ENCODE measurements at regions of chr5 and their contacts with region 1.

Region 1: GRCh38 chr5:171330021-171330420 is 21.0 kb downstream of the TLX3 start:
- DNase-seq: no peak
- ATAC-seq: no peak
- H3K4me3 ChIP-seq: no peak overlapping the region
- H3K27ac ChIP-seq: no peak overlapping the region
- H3K4me1 ChIP-seq: no peaks in the 10 kb centered on the region
- H3K27me3 ChIP-seq: peaks cover 36% of the 10 kb centered on the region
- CTCF ChIP-seq: no peak
- POLR2A ChIP-seq: no peak
- RAD21 ChIP-seq: no peak

Region 2: DNA sequence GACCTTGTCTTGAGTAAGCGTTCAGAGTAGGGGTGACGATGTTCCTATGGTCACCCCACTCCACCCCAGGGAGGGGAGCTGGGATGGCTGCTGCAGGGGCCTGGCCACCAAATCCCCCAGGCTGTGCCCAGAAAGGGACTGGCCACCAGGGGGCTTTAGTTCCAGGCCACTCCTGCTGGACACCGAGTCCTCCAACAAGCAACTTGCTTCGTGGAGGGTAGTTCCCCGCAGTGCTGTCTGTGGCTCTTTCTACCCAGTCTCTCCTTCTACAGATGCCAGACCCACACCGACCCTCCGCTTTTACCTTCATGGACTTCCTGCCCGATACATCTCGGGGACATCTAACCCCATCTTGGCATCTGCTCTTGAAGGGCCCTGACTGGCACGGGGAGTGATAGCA is 582.2 kb before region 1 on chr5:
- CTCF ChIA-PET with region 1: no interaction called
- POLR2A ChIA-PET with region 1: no interaction called
- dilution Hi-C with region 1: no loop called
- in situ Hi-C with region 1: loop called (anchors 5 kb)
- intact Hi-C with region 1: no loop called
- DNase-seq: no peak
- ATAC-seq: no peak
- H3K4me3 ChIP-seq: no peak overlapping the region
- H3K27ac ChIP-seq: no peak overlapping the region
- H3K4me1 ChIP-seq: peaks cover 2% of the 10 kb centered on the region; the same call in 1 of the 2 replicates
- H3K27me3 ChIP-seq: peaks cover 35% of the 10 kb centered on the region
- CTCF ChIP-seq: peak; percentile 34
- POLR2A ChIP-seq: no peak
- RAD21 ChIP-seq: peak; percentile 29; the same call in 1 of the 2 replicates